ENCODE measurements at regions of chr13 and their contacts with region 1.

Region 1: DNA sequence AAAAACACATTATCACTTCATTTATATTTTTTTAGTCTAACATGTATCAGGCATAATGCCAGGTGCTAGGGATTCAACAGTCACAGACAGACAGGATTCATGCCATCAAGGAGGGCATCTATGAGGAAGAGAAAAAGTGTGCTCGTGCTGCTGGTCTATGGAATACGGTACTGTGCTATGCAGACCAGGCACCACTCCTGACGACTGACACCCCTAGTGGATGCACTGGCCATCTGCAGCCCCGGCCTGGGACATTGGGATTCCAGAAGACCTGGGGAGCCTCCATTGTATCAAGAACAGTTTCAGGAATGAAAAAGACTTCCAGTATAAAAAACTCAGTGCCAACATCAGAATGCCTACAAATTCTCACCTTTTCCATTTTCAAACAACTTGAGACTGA is 94.0 kb downstream of the KLF12 start:
- DNase-seq: peak; percentile 31
- ATAC-seq: peak; percentile 75
- H3K4me3 ChIP-seq: no peak overlapping the region
- H3K27ac ChIP-seq: no peak overlapping the region
- H3K4me1 ChIP-seq: peaks cover 2% of the 10 kb centered on the region; the same call in 1 of the 2 replicates
- H3K27me3 ChIP-seq: no peaks in the 10 kb centered on the region
- CTCF ChIP-seq: peak; percentile 49
- POLR2A ChIP-seq: no peak
- RAD21 ChIP-seq: peak; percentile 34; the same call in 1 of the 2 replicates

Region 2: DNA sequence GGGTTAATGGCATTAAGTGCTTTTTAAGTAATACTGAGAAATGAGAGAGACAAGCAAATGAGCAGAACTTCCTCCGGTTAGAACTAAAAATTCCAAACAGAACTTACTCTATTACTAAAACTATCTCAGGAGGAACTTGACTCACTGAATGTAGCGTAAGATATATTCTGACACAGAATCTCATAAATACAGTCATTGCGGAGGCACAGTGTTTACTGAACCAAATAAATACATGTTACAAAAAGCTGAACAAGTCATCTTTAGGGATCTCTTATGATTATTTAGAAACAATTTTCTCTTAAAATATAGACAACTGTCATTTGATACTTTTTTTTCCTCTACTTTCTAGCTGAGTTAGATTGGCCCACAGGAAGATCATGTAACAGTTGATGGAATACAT is 189.1 kb before region 1 on chr13:
- CTCF ChIA-PET with region 1: no interaction called
- POLR2A ChIA-PET with region 1: no interaction called
- dilution Hi-C with region 1: no loop called
- in situ Hi-C with region 1: no loop called
- intact Hi-C with region 1: loop called (anchors 10 kb)
- DNase-seq: peak; percentile 81
- ATAC-seq: peak; percentile 90
- H3K4me3 ChIP-seq: no peak overlapping the region
- H3K27ac ChIP-seq: no peak overlapping the region; the same call in 1 of the 2 replicates
- H3K4me1 ChIP-seq: peaks cover 3% of the 10 kb centered on the region
- H3K27me3 ChIP-seq: no peaks in the 10 kb centered on the region
- CTCF ChIP-seq: no peak
- POLR2A ChIP-seq: no peak
- RAD21 ChIP-seq: no peak

Region 3: DNA sequence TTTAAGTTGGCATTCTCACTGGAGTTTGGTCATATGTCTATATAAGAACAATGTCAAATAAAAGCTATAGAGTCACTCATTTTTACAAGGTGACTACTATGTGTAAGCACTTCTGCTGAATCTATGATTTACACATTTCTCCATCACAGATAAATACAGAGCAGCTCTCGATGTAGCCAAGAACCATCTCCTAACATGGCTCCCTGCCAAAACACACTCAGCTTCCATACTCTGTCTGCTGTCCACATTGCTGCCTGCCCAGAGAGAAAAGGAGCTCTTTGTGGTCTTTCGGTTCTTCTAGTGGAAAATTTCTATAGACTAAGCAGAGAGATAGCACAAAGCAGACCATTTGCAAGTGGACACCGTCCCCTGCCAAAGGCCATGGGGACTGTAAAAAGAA is 284.9 kb after region 1 on chr13:
- CTCF ChIA-PET with region 1: no interaction called
- POLR2A ChIA-PET with region 1: no interaction called
- dilution Hi-C with region 1: no loop called
- in situ Hi-C with region 1: no loop called
- intact Hi-C with region 1: no loop called
- DNase-seq: peak; percentile 87
- ATAC-seq: peak; percentile 92
- H3K4me3 ChIP-seq: no peak overlapping the region
- H3K27ac ChIP-seq: 0 out of 2 replicates have a peak overlapping the region, but pooled peaks have one; percentile 6
- H3K4me1 ChIP-seq: no peaks in the 10 kb centered on the region
- H3K27me3 ChIP-seq: 0 out of 2 replicates have a peak, but pooled peaks cover 2% of the 10 kb centered on the region
- CTCF ChIP-seq: no peak
- POLR2A ChIP-seq: no peak
- RAD21 ChIP-seq: no peak

Measured in IMR-90 (cell line).